Caco-2 (cell line): ENCODE measurements at regions of chr18 and their contacts with region 1.

Region 1: DNA sequence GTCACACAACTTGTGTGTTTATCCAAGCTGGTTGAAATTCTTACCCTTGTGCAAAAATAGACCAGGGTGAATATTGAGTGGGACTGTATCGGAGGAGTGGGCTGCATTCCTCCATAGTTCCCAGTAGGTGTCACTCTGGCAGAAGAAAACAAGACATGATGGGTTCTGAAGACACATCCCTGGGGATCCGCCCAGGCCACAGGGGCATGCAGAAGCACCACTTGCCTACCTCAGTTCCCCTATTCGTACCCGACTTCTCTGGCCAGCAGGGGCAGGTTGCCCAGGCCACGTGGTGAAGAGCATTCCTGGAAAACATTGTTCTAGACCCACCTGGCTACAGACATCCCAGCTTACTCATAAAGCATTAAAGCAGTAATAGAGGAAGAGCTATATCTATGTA is 168.2 kb downstream of the FAM210A start:
- DNase-seq: peak in 1 of 2 experiments; percentile 47
- H3K4me3 ChIP-seq: no peak overlapping the region
- H3K4me3 Mint-ChIP-seq: no peak overlapping the region
- H3K27ac Mint-ChIP-seq: no peak overlapping the region
- H3K4me1 ChIP-seq: no peaks in the 10 kb centered on the region
- H3K4me1 Mint-ChIP-seq: no peaks in the 10 kb centered on the region
- H3K27me3 ChIP-seq: no peaks in the 10 kb centered on the region
- H3K27me3 Mint-ChIP-seq: peaks cover 16% of the 10 kb centered on the region
- CTCF ChIP-seq: peak; percentile 59 to 77

Region 2: DNA sequence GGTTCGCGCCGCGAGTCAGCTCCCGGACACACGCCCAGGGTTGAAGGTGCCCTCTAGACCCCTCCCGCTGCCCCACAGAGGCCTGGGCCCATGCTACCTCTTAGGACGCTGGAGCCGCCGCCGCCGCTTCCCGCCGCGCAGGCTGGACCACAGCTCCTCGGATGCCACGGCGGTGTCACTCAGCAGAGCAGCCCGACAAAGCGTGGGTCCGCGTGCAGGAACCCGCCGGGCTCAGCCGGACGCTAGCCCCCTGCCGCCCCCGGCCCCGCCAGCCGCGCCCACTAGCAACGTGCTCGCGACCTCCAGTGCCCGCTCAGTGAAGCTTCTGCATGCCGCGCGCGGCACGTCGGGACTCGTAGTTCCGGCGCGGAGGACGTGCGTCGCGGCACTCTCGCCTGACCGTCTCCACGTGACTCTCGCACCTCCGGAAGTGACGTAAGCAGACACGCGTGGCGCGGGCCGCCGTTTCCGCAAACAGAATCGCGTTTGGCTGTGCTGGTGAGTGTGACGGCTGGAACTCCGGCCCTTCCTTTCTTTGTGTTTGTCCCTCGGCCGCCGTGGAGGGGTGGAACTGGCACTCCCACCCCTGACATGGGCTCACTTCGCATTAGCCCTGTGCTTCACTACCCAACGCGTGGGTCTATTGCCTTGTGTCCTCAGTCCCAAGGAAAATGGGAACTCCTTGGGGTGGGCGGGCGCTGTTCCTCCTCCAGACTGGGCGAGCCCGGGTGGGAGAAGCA is 168.3 kb after region 1 on chr18 and contains the starts of genes FAM210A and RNMT:
- CTCF ChIA-PET with region 1: no interaction called
- POLR2A ChIA-PET with region 1: no interaction called
- intact Hi-C with region 1: loop called (anchors 5 kb)
- DNase-seq: peak; percentile 94 to 95
- H3K4me3 ChIP-seq: peak within 1 kb of the TSS; percentile 83
- H3K4me3 Mint-ChIP-seq: peak within 1 kb of the TSS; percentile 85
- H3K27ac Mint-ChIP-seq: peak within 1 kb of the TSS; percentile 60
- H3K4me1 ChIP-seq: no peaks in the 10 kb centered on the region
- H3K4me1 Mint-ChIP-seq: peaks cover 18% of the 10 kb centered on the region
- H3K27me3 ChIP-seq: no peaks in the 10 kb centered on the region
- H3K27me3 Mint-ChIP-seq: no peaks in the 10 kb centered on the region
- CTCF ChIP-seq: no peak
- total RNA-seq, gene FAM210A: 17.1 and 17.4 TPM in 2 replicates
- total RNA-seq, gene RNMT: 34.2 and 36.5 TPM in 2 replicates

Region 3: GRCh38 chr18:13800505-13801259 is 242.6 kb after region 1 on chr18:
- CTCF ChIA-PET with region 1: interaction called, 3 read pairs
- POLR2A ChIA-PET with region 1: no interaction called
- intact Hi-C with region 1: loop called (anchors 1 kb)
- DNase-seq: peak; percentile 78 to 84
- H3K4me3 ChIP-seq: peak overlapping the region; percentile 27
- H3K4me3 Mint-ChIP-seq: peak overlapping the region; percentile 73
- H3K27ac Mint-ChIP-seq: no peak overlapping the region
- H3K4me1 ChIP-seq: no peaks in the 10 kb centered on the region
- H3K4me1 Mint-ChIP-seq: peaks cover 11% of the 10 kb centered on the region
- H3K27me3 ChIP-seq: no peaks in the 10 kb centered on the region
- H3K27me3 Mint-ChIP-seq: peaks cover 7% of the 10 kb centered on the region
- CTCF ChIP-seq: peak; percentile 47 to 86